HCT116 (cell line): ENCODE measurements at regions of chr1 and their contacts with region 1.

Region 1: GRCh38 chr1:237429252-237429651 is 387.3 kb downstream of the RYR2 start:
- DNase-seq: no peak
- ATAC-seq: no peak
- H3K4me3 ChIP-seq: no peak overlapping the region
- H3K27ac ChIP-seq: no peak overlapping the region
- H3K4me1 ChIP-seq: no peaks in the 10 kb centered on the region
- H3K27me3 ChIP-seq: no peaks in the 10 kb centered on the region
- CTCF ChIP-seq: no peak
- POLR2A ChIP-seq: no peak
- RAD21 ChIP-seq: no peak

Region 2: DNA sequence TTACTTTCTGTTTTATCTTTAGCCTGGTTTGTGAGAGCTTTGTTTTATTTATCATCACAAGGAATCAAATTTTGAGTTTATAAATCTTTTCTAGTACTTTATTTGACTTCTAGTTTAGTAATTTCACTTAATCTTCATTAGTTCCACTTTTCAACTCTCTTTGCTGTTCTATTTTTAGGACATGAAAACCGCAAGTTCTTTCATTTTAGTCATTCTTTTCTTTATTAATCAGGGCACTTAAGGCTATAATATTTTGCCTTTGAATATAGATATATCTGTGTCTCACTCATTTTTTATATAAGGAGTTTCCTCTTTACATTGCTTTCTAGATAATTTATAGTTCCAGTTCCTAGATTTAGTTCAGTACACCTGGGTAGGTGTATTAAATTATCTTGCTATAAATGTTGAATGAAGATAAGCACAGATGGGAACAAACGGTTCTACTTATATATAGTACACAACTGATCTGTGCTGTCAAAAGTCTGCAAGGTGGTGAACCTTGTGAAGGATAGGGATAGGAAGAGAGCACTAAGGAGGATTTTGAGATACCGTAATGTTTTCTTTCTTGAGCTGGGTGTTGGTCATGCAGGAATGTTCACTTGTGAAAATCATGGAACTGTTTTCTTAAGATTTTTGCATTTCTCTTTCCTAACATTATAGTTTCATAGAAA is 15.0 kb after region 1 on chr1:
- CTCF ChIA-PET with region 1: no interaction called
- POLR2A ChIA-PET with region 1: no interaction called
- RAD21 ChIA-PET with region 1: no interaction called
- intact Hi-C with region 1: loop called (anchors 1 kb)
- DNase-seq: no peak
- ATAC-seq: no peak
- H3K4me3 ChIP-seq: no peak overlapping the region
- H3K27ac ChIP-seq: no peak overlapping the region
- H3K4me1 ChIP-seq: no peaks in the 10 kb centered on the region
- H3K27me3 ChIP-seq: no peaks in the 10 kb centered on the region
- CTCF ChIP-seq: no peak
- POLR2A ChIP-seq: no peak
- RAD21 ChIP-seq: no peak

Region 3: GRCh38 chr1:237921306-237921705 is 492.1 kb after region 1 on chr1:
- CTCF ChIA-PET with region 1: no interaction called
- POLR2A ChIA-PET with region 1: no interaction called
- RAD21 ChIA-PET with region 1: no interaction called
- intact Hi-C with region 1: loop called (anchors 10 kb)
- DNase-seq: no peak
- ATAC-seq: no peak
- H3K4me3 ChIP-seq: no peak overlapping the region
- H3K27ac ChIP-seq: no peak overlapping the region
- H3K4me1 ChIP-seq: no peaks in the 10 kb centered on the region
- H3K27me3 ChIP-seq: no peaks in the 10 kb centered on the region
- CTCF ChIP-seq: no peak
- POLR2A ChIP-seq: no peak
- RAD21 ChIP-seq: no peak

Region 4: DNA sequence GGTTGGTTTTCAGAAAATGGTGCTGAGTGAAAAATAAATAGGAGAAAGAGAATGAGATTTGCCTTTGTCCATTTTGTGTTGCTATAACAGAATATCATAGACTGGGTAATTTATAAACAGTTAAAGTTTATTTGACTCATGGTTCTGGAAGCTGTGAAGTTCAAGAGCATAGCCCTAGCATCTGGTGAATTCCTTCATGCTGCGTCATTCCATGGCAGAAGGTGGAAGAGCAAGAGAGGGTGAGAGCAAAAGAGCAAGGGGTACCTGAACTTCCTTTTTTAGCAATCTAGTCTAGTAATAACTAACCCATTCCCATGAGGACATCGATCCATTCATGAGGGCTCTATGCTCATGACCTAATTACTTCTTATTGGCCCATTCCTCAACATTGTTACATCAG is 670.6 kb after region 1 on chr1:
- CTCF ChIA-PET with region 1: no interaction called
- POLR2A ChIA-PET with region 1: no interaction called
- RAD21 ChIA-PET with region 1: no interaction called
- intact Hi-C with region 1: no loop called
- DNase-seq: no peak
- ATAC-seq: no peak
- H3K4me3 ChIP-seq: no peak overlapping the region
- H3K27ac ChIP-seq: no peak overlapping the region
- H3K4me1 ChIP-seq: no peaks in the 10 kb centered on the region
- H3K27me3 ChIP-seq: no peaks in the 10 kb centered on the region
- CTCF ChIP-seq: no peak
- POLR2A ChIP-seq: no peak
- RAD21 ChIP-seq: no peak